ENCODE measurements at regions of chr2 and their contacts with region 1.

Region 1: DNA sequence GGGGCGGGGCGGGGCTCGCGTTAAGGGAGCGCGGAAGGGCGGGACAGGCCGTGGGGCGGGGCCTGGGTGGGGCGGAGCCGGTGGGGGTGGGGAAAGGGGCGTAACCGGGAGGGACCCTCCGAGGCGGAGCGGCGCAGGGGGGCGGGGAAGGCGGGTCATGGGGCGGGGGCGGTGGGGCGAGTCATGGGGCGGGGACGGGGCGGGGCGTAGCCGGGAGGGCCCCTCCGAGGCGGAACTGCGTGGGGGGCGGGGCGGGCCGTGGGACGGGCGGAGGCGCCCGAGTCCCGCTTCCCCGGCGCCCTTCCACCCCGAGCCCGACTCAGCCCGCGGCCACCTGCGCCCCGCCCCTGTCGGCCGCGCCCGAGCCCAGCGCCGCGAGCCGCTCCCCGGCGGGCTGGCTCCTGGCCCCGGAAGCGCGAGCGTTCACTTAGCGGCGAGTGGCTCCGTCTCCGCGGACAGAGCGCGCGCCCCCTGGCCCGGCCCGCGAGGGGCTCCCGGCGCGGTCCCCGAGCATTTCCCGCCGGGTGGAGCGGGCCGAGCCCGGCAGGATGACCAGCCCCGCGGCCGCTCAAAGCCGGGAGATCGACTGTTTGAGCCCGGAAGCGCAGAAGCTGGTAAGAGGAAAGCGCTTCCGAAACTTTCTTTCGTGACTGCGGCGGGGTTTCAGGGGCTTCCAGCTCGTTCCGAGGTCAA is 64.7 kb downstream of the LRRFIP1 start:
- DNase-seq: peak; percentile 88 to 96
- ATAC-seq: peak; percentile 51 to 79 (median 67)
- H3K4me3 ChIP-seq: peak overlapping the region; percentile 87
- H3K4me3 Mint-ChIP-seq: peak overlapping the region; percentile 98
- H3K27ac ChIP-seq: peak overlapping the region; percentile 93
- H3K27ac Mint-ChIP-seq: peak overlapping the region; percentile 95 to 99
- H3K4me1 ChIP-seq: peaks cover 71% of the 10 kb centered on the region
- H3K4me1 Mint-ChIP-seq: peaks cover 74 to 80% of the 10 kb centered on the region in 2 donors
- H3K27me3 ChIP-seq: no peaks in the 10 kb centered on the region
- H3K27me3 Mint-ChIP-seq: no peaks in the 10 kb centered on the region
- CTCF ChIP-seq: no peak

Region 2: DNA sequence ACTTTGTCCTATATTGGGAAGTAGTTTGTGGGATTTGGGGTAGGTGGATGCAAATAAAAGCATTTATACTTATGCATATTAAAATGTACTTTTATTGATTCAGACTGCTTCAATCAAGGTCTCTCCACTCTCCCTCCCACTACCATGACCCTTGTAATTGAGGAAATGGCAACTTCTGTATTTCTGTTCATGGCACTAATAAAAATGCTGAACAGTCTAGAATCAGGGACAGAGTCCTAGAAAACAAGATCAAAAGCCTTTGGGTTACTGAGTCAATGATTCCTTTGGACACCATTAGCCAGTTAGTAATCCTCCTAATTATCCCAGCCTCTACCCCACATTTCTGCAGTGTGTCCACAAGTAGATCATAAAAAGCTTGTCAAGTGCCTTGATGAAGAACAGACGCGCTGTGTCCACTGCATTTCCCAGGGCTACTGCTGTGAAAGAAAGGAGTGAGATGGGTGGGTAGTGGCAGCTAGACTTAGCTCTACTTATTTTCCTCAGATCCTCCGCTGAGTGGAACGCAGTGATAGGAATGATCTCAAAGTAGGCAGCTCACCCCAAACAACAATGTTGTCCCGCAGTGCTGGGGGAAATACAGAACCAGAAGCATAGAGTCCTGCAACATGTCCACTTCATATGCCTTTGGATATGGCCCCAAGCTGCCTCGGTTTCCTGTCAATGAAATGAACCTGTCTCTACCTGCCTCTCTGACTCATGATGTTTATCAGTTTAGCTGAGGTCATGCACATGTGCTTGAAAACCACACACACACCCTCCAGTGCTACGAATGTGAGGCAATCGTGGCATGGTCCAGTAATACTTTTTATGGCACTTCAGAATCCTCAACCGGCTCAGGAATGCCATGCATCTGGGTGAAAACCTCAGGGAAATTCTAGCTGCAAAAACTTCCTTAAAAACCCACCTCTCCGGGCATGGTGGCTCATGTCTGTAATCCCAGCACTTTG is 393.6 kb before region 1 on chr2:
- intact Hi-C with region 1: no loop called
- DNase-seq: no peak
- ATAC-seq: no peak
- H3K4me3 ChIP-seq: no peak overlapping the region
- H3K4me3 Mint-ChIP-seq: no peak overlapping the region
- H3K27ac ChIP-seq: no peak overlapping the region
- H3K27ac Mint-ChIP-seq: no peak overlapping the region
- H3K4me1 ChIP-seq: no peaks in the 10 kb centered on the region
- H3K4me1 Mint-ChIP-seq: no peaks in the 10 kb centered on the region
- H3K27me3 ChIP-seq: no peaks in the 10 kb centered on the region
- H3K27me3 Mint-ChIP-seq: peaks cover 18 to 39% of the 10 kb centered on the region in 2 donors
- CTCF ChIP-seq: no peak

Region 3: GRCh38 chr2:237702441-237703391 is 10.7 kb after region 1 on chr2:
- intact Hi-C with region 1: loop called (anchors 1 kb)
- DNase-seq: peak in 1 of 2 donors; percentile 50
- ATAC-seq: peak in 2 of 3 donors; percentile 8 to 24
- H3K4me3 ChIP-seq: peak overlapping the region; percentile 2
- H3K4me3 Mint-ChIP-seq: peak overlapping the region; percentile 70
- H3K27ac ChIP-seq: peak overlapping the region; percentile 8
- H3K27ac Mint-ChIP-seq: peak overlapping the region; percentile 86 to 99
- H3K4me1 ChIP-seq: peaks cover 95% of the 10 kb centered on the region
- H3K4me1 Mint-ChIP-seq: peaks cover 82 to 94% of the 10 kb centered on the region in 2 donors
- H3K27me3 ChIP-seq: no peaks in the 10 kb centered on the region
- H3K27me3 Mint-ChIP-seq: no peaks in the 10 kb centered on the region
- CTCF ChIP-seq: no peak

Region 4: GRCh38 chr2:237731663-237732062 is 39.6 kb after region 1 on chr2:
- intact Hi-C with region 1: loop called (anchors 5 kb)
- DNase-seq: peak in 1 of 2 donors; percentile 31
- ATAC-seq: peak; percentile 65 to 83 (median 70)
- H3K4me3 ChIP-seq: no peak overlapping the region
- H3K4me3 Mint-ChIP-seq: peak overlapping the region; percentile 45
- H3K27ac ChIP-seq: no peak overlapping the region
- H3K27ac Mint-ChIP-seq: peak overlapping the region; percentile 54 to 67
- H3K4me1 ChIP-seq: peaks cover 24% of the 10 kb centered on the region
- H3K4me1 Mint-ChIP-seq: peaks cover 60 to 61% of the 10 kb centered on the region in 2 donors
- H3K27me3 ChIP-seq: no peaks in the 10 kb centered on the region
- H3K27me3 Mint-ChIP-seq: no peaks in the 10 kb centered on the region
- CTCF ChIP-seq: no peak

Region 5: GRCh38 chr2:237744613-237745249 is 52.7 kb after region 1 on chr2:
- intact Hi-C with region 1: loop called (anchors 5 kb)
- DNase-seq: peak; percentile 75 to 86
- ATAC-seq: peak; percentile 77 to 89 (median 86)
- H3K4me3 ChIP-seq: no peak overlapping the region
- H3K4me3 Mint-ChIP-seq: no peak overlapping the region
- H3K27ac ChIP-seq: peak overlapping the region; percentile 31
- H3K27ac Mint-ChIP-seq: peak overlapping the region; percentile 76 to 86
- H3K4me1 ChIP-seq: peaks cover 13% of the 10 kb centered on the region
- H3K4me1 Mint-ChIP-seq: peaks cover 30 to 40% of the 10 kb centered on the region in 2 donors
- H3K27me3 ChIP-seq: no peaks in the 10 kb centered on the region
- H3K27me3 Mint-ChIP-seq: no peaks in the 10 kb centered on the region
- CTCF ChIP-seq: peak; percentile 98

Region 6: DNA sequence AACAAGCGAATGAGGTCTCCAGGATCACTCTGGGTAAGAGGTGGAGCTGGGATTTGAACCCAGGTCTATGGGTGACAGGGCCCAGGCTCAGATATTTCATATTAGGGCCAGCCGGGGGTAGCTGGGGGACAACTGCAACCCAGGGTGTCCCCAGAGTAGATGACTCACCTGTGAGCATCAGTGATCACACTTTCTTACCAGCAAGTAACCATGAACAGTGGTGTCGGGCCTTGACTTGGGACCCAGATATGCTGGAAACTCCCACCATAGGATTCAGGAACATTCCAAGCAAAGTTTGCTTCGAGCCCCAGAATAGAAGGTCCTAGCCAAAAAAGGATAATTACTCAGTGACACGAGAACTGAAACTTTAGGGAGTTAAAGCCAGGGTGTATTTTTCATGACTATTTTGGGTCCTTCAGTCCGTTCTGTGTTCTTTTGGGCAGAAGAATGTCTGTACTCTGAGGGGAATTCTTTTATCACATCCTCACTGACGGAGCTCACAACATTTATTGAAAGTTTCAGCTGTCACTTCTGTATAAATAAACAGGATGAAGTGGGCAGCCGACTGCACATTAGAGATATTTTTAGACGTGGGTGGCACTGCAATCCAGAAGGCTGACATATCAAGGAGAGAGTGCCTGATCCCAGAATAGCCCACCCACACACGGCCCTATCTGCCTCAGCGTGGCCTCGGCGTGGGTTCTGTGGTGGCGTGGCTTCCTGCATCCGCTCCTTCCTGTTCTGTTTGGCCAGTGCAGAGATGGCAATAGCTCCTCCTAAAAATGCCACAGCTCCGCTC is 212.9 kb after region 1 on chr2:
- intact Hi-C with region 1: loop called (anchors 10 kb)
- DNase-seq: no peak
- ATAC-seq: peak; percentile 28 to 51 (median 46)
- H3K4me3 ChIP-seq: no peak overlapping the region
- H3K4me3 Mint-ChIP-seq: peak overlapping the region; percentile 76
- H3K27ac ChIP-seq: peak overlapping the region; percentile 71
- H3K27ac Mint-ChIP-seq: peak overlapping the region; percentile 95 to 98
- H3K4me1 ChIP-seq: peaks cover 59% of the 10 kb centered on the region
- H3K4me1 Mint-ChIP-seq: peaks cover 51 to 53% of the 10 kb centered on the region in 2 donors
- H3K27me3 ChIP-seq: no peaks in the 10 kb centered on the region
- H3K27me3 Mint-ChIP-seq: no peaks in the 10 kb centered on the region
- CTCF ChIP-seq: no peak

Measured in natural killer cell (primary cell).